Panc1 (cell line): ENCODE measurements at regions of chr3 and their contacts with region 1.

Region 1: DNA sequence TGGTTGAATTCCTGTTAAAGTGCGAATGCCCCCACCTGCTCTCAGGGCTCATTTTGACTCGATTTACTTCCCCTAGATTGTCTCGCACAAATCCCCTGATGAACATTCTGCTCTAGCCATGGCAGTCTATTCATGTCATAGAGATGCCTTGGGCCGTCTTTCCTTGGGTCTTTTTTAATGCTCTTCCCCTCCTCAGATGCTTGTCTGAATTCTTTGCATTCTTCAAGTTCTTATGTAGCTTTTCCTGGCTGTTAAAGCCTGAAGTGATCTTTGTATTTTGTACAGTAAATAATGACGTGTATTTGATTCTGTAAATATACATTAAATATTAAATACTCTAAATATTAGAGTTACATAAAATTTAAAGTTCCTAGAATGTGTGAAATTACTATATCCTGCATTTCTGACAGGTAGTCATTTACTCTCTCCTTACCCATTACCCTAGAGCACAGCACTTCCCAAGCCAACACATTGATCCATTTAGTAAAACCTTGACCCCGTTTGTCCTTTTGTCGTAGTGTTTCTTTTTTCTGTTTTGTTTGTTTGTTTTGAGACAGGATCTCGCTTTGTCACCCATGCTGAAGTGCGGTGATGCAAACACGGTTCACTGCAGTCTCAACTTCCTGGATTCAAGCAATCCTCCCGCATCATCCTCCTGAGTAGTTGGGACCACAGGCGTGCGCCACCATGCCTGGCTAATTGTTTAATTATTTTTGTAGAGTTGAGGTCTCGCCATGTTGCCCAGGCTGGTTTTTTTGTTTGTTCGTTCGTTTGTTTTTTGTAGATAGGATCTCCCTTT is 47.9 kb downstream of the YEATS2 start:
- DNase-seq: no peak
- ATAC-seq: peak; percentile 57
- H3K4me3 ChIP-seq: no peak overlapping the region
- H3K27ac ChIP-seq: 0 out of 2 replicates have a peak overlapping the region, but pooled peaks have one; percentile 12
- H3K4me1 ChIP-seq: peaks cover 12% of the 10 kb centered on the region
- H3K27me3 ChIP-seq: no peaks in the 10 kb centered on the region
- CTCF ChIP-seq: no peak

Region 2: GRCh38 chr3:183548262-183548769 is 197.2 kb before region 1 on chr3:
- CTCF ChIA-PET with region 1: no interaction called
- POLR2A ChIA-PET with region 1: interaction called, 15 read pairs
- in situ Hi-C with region 1: no loop called
- intact Hi-C with region 1: no loop called
- DNase-seq: no peak
- ATAC-seq: peak; percentile 68
- H3K4me3 ChIP-seq: no peak overlapping the region
- H3K27ac ChIP-seq: no peak overlapping the region
- H3K4me1 ChIP-seq: no peaks in the 10 kb centered on the region
- H3K27me3 ChIP-seq: no peaks in the 10 kb centered on the region
- CTCF ChIP-seq: no peak

Region 3: DNA sequence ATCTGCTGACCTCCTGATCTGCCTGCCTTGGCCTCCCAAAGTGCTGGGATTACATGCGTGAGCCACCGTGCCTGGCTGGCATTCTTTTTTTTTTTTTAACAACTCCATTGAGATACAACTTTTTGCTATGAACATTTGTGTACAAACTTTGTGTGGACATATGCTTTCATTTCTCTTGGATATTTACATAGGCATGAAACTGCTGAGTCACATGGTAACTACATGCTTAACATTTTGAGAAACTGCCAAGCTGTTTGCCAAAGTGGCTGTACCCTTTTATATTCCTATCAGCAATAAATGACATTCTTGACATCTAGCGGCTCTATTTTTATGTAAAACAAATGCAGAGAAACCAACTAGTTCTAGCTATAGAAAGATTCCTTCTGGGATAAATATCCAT is 56.6 kb before region 1 on chr3:
- CTCF ChIA-PET with region 1: no interaction called
- POLR2A ChIA-PET with region 1: no interaction called
- in situ Hi-C with region 1: no loop called
- intact Hi-C with region 1: no loop called
- DNase-seq: no peak
- ATAC-seq: no peak
- H3K4me3 ChIP-seq: no peak overlapping the region
- H3K27ac ChIP-seq: no peak overlapping the region
- H3K4me1 ChIP-seq: no peaks in the 10 kb centered on the region
- H3K27me3 ChIP-seq: no peaks in the 10 kb centered on the region
- CTCF ChIP-seq: no peak